H1 (cell line): ENCODE measurements at regions of chr7 and their contacts with region 1.

Region 1: GRCh38 chr7:107964510-107964909 is 38.5 kb downstream of the LAMB1 start:
- DNase-seq: no peak
- H3K4me3 ChIP-seq: no peak overlapping the region
- H3K27ac ChIP-seq: no peak overlapping the region
- H3K4me1 ChIP-seq: peaks cover 0 to 10% (median 8%) of the 10 kb centered on the region in 4 experiments; a peak in 5 of 7 replicates
- H3K27me3 ChIP-seq: no peaks in the 10 kb centered on the region
- CTCF ChIP-seq: no peak
- EP300 ChIP-seq: no peak
- POLR2A ChIP-seq: no peak
- RAD21 ChIP-seq: no peak

Region 2: DNA sequence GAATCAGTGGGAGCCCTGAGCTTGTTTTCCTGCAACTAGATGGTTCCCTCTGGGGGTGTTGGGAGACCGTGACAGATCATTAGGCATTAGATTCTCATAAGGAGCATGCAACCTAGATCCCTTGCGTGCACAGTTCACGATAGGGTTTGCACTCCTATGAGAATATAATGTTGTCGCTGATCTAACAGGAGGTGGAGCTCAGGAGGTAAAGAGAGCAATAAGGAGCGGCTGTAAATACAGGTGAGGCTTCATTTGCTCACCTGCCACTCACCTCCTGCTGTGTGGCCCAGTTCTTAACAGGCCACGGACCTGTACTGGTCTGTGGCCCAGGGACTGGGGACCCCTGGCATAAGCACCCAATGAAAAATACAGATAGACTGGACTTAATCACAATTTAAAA is 172.1 kb before region 1 on chr7:
- CTCF ChIA-PET with region 1: no interaction called
- POLR2A ChIA-PET with region 1: no interaction called
- DNase-seq: no peak
- H3K4me3 ChIP-seq: no peak overlapping the region
- H3K27ac ChIP-seq: no peak overlapping the region
- H3K4me1 ChIP-seq: no peaks in the 10 kb centered on the region; a peak in 1 of 7 replicates
- H3K27me3 ChIP-seq: no peaks in the 10 kb centered on the region
- CTCF ChIP-seq: no peak
- EP300 ChIP-seq: no peak
- POLR2A ChIP-seq: no peak
- RAD21 ChIP-seq: no peak

Region 3: GRCh38 chr7:107953924-107954303 is 10.6 kb before region 1 on chr7:
- CTCF ChIA-PET with region 1: interaction called, 10 read pairs
- POLR2A ChIA-PET with region 1: interaction called, 6 read pairs
- DNase-seq: no peak
- H3K4me3 ChIP-seq: no peak overlapping the region
- H3K27ac ChIP-seq: no peak overlapping the region
- H3K4me1 ChIP-seq: peaks cover 3 to 18% (median 11%) of the 10 kb centered on the region in 4 experiments; a peak in 6 of 7 replicates
- H3K27me3 ChIP-seq: no peaks in the 10 kb centered on the region
- CTCF ChIP-seq: no peak
- EP300 ChIP-seq: no peak
- POLR2A ChIP-seq: no peak
- RAD21 ChIP-seq: no peak